ENCODE measurements at regions of chr3 and their contacts with region 1.

Region 1: GRCh38 chr3:161274719-161275298 is 53.7 kb downstream of the NMD3 start:
- DNase-seq: peak; percentile 54
- ATAC-seq: peak; percentile 84
- H3K4me3 ChIP-seq: no peak overlapping the region
- H3K27ac ChIP-seq: no peak overlapping the region
- H3K4me1 ChIP-seq: no peaks in the 10 kb centered on the region
- H3K27me3 ChIP-seq: no peaks in the 10 kb centered on the region
- CTCF ChIP-seq: peak; percentile 51 to 87 (median 65); a peak in 5 of 6 replicates
- POLR2A ChIP-seq: no peak
- RAD21 ChIP-seq: peak; percentile 67

Region 2: DNA sequence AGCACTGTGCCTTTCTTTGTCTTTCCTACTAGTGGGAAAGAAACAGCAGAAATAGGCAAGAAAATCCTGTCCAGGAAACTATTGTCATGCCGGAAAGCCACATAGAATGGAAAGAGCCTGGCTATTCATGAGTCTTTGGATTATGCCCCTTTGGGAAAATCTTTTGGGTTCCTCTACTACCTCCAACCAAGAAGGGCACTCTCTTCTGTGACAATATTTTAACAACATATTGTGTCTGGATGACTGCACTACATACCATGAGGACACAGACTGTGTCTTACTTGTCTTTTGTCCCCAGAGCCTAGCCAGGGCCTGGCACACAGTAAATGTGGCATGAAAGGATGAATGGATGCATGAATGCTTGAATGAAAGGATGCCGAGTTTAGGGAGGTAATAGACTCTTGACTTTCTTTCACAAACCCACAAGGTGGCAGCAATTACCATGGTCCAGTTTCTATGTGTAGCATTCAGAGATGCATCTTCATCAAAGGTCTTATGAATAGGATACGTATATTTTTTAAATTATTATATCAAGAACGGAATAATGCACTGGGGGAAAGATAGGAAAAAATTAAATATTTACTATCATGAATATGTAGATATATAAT is 567.5 kb before region 1 on chr3:
- CTCF ChIA-PET with region 1: interaction called, 3 read pairs
- POLR2A ChIA-PET with region 1: no interaction called
- RAD21 ChIA-PET with region 1: no interaction called
- intact Hi-C with region 1: loop called (anchors 10 kb)
- DNase-seq: peak; percentile 37
- ATAC-seq: peak; percentile 92
- H3K4me3 ChIP-seq: no peak overlapping the region
- H3K27ac ChIP-seq: no peak overlapping the region
- H3K4me1 ChIP-seq: no peaks in the 10 kb centered on the region
- H3K27me3 ChIP-seq: no peaks in the 10 kb centered on the region
- CTCF ChIP-seq: peak; percentile 46 to 74 (median 59); a peak in 5 of 6 replicates
- POLR2A ChIP-seq: no peak
- RAD21 ChIP-seq: peak; percentile 87

Region 3: DNA sequence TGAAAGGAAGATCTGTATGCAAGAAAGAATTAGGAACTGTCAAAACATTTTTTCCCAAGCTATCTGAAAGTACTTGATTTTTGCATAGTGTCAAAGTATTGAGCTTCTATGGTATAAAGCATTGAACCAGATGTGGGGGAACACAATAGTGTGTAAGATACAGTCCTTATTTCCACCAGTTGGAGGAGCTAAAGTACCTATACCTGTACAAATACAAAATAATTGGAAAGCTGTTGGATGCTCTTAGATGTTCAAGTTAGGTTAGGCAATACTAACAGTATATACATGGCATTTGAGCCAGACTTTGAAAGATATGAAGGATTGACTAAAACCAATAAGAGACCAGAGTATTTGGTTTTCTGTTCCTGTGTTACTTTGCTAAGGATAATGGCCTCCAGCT is 318.0 kb before region 1 on chr3:
- CTCF ChIA-PET with region 1: no interaction called
- POLR2A ChIA-PET with region 1: no interaction called
- RAD21 ChIA-PET with region 1: no interaction called
- intact Hi-C with region 1: loop called (anchors 2 kb)
- DNase-seq: no peak
- ATAC-seq: peak; percentile 74
- H3K4me3 ChIP-seq: no peak overlapping the region
- H3K27ac ChIP-seq: no peak overlapping the region
- H3K4me1 ChIP-seq: no peaks in the 10 kb centered on the region
- H3K27me3 ChIP-seq: no peaks in the 10 kb centered on the region
- CTCF ChIP-seq: peak; percentile 20 to 44 (median 26); a peak in 4 of 6 replicates
- POLR2A ChIP-seq: no peak
- RAD21 ChIP-seq: peak; percentile 63

Region 4: GRCh38 chr3:161096771-161097355 is 177.9 kb before region 1 on chr3:
- CTCF ChIA-PET with region 1: interaction called, 3 read pairs
- POLR2A ChIA-PET with region 1: no interaction called
- RAD21 ChIA-PET with region 1: no interaction called
- intact Hi-C with region 1: loop called (anchors 5 kb)
- DNase-seq: no peak
- ATAC-seq: peak; percentile 78
- H3K4me3 ChIP-seq: no peak overlapping the region
- H3K27ac ChIP-seq: no peak overlapping the region
- H3K4me1 ChIP-seq: peaks cover 0 to 5% of the 10 kb centered on the region in 2 experiments; a peak in 1 of 4 replicates
- H3K27me3 ChIP-seq: no peaks in the 10 kb centered on the region
- CTCF ChIP-seq: peak; percentile 51 to 69 (median 66); a peak in 5 of 6 replicates
- POLR2A ChIP-seq: no peak
- RAD21 ChIP-seq: peak; percentile 64

Region 5: GRCh38 chr3:161409069-161409468 is 134.3 kb after region 1 on chr3:
- CTCF ChIA-PET with region 1: interaction called, 4 read pairs
- POLR2A ChIA-PET with region 1: no interaction called
- RAD21 ChIA-PET with region 1: no interaction called
- intact Hi-C with region 1: loop called (anchors 1 kb)
- DNase-seq: peak; percentile 49
- ATAC-seq: peak; percentile 87
- H3K4me3 ChIP-seq: no peak overlapping the region
- H3K27ac ChIP-seq: no peak overlapping the region
- H3K4me1 ChIP-seq: no peaks in the 10 kb centered on the region
- H3K27me3 ChIP-seq: no peaks in the 10 kb centered on the region
- CTCF ChIP-seq: peak; percentile 57 to 88 (median 80)
- POLR2A ChIP-seq: no peak
- RAD21 ChIP-seq: peak; percentile 89

Measured in HCT116 (cell line).